ENCODE measurements at regions of chr3 and their contacts with region 1.

Region 1: GRCh38 chr3:126961191-126961790 is 21.6 kb upstream of the PLXNA1 start:
- DNase-seq: peak; percentile 75
- ATAC-seq: peak; percentile 67
- H3K4me3 ChIP-seq: no peak overlapping the region
- H3K27ac ChIP-seq: peak overlapping the region; percentile 89
- H3K4me1 ChIP-seq: peaks cover 37% of the 10 kb centered on the region
- H3K27me3 ChIP-seq: no peaks in the 10 kb centered on the region
- CTCF ChIP-seq: no peak

Region 2: DNA sequence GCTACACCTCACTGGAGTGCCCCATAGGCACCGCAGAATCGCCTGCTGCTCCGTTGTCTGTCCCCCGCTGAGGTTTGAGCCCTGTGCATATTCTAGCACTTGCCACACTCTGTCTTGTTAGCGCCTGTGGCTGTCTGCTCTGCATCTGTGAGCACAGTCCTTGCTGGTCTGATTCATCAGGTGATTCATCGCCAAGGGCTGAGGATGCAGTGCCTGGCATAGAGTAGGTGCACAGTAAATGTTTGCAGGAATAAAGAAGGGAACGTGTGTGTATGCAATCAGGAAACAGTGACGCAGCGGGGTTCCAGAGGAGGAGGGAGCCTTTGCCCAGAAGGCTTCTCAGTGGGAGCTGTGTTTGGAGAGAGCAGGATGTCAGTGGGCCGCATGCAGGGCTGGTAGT is 102.4 kb before region 1 on chr3:
- CTCF ChIA-PET with region 1: interaction called, 3 read pairs
- POLR2A ChIA-PET with region 1: no interaction called
- intact Hi-C with region 1: loop called (anchors 10 kb)
- DNase-seq: peak; percentile 93
- ATAC-seq: peak; percentile 99
- H3K4me3 ChIP-seq: no peak overlapping the region
- H3K27ac ChIP-seq: peak overlapping the region; percentile 82
- H3K4me1 ChIP-seq: peaks cover 16% of the 10 kb centered on the region
- H3K27me3 ChIP-seq: no peaks in the 10 kb centered on the region
- CTCF ChIP-seq: no peak

Region 3: DNA sequence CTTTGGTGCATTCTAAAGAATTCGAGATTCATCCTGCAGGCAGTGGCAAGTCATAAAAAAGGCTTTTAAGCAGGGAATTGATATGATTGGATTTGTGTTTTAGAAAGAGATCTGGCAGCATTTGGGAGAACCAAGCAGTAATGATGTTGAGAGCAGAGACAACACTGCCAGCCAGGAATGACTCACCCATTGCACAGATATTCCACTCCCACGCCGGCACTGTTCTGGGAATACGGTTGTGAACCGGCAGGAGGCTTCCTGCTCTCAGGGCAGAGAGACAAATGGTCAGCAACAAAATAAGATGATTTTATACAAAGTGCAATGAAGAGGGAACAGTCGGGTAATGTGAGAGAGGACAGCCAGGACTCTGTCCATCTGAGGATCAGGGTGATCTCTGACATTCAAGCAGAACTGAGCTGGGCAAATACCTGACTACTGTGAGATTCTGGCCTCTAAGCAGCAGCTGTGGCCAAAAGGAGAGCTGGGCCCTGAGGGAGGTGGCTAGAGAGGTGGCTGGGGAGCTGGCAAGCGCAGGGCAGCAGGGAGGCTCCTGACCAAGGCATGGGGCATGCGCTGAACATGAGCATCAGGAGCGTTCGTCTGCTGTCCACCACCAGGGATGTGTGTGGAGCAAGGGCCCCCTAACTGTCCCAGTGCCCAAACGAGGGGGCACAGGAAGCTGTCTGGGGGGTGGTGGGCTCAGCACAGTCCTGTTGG is 34.4 kb before region 1 on chr3:
- CTCF ChIA-PET with region 1: no interaction called
- POLR2A ChIA-PET with region 1: no interaction called
- intact Hi-C with region 1: loop called (anchors 5 kb)
- DNase-seq: peak; percentile 76
- ATAC-seq: peak; percentile 91
- H3K4me3 ChIP-seq: no peak overlapping the region
- H3K27ac ChIP-seq: peak overlapping the region; percentile 81
- H3K4me1 ChIP-seq: peaks cover 40% of the 10 kb centered on the region
- H3K27me3 ChIP-seq: no peaks in the 10 kb centered on the region
- CTCF ChIP-seq: no peak

Region 4: DNA sequence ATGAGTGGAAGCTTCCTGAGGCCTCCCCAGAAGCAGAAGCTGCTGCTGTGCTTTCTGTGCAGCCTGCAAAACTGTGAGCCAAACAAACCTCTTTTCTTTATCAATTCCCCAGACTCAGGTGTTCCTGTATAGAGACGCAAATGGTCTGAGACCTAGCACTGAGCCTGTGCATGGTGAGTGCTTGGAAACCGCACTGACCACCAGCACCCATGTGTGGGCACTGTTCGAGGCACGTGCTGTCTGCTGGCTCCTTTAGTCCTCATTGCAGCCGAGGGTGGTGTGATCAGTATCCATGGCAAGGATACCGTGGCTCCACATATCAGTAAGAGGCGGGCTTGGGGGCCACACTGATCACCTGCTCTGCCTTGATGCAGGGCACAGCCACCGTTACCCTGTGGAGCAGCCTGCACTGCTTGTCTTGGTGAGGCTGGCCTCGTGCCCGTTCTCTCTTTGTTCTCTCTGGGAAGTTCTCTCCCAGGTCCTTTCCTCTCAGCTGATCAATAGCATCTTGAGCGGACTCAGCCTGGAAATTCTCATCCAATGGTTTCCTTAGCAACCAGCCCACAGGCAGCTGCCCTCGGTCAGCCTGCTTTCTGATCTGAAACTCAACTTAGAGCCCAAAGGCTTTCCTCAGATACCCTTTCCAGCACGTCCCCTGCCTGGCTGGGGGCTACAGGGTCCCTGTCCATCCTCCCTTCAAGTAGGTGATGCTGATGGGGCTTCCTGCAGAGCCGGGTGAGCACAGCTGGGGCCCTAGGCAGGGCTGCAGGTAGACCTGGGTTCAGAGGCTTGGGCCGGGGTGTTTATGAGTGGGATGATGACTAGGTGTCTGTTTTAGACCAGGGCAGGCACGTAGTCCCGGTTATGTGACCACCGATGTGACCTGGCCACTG is 122.7 kb after region 1 on chr3:
- CTCF ChIA-PET with region 1: no interaction called
- POLR2A ChIA-PET with region 1: no interaction called
- intact Hi-C with region 1: no loop called
- DNase-seq: no peak
- ATAC-seq: no peak
- H3K4me3 ChIP-seq: no peak overlapping the region
- H3K27ac ChIP-seq: no peak overlapping the region
- H3K4me1 ChIP-seq: no peaks in the 10 kb centered on the region
- H3K27me3 ChIP-seq: peaks cover 4% of the 10 kb centered on the region; the same call in 1 of the 2 replicates
- CTCF ChIP-seq: no peak

Measured in PC-3 (cell line).